ENCODE measurements at regions of chr17 and their contacts with region 1.

Region 1: GRCh38 chr17:42405963-42406495 is 17.0 kb downstream of the CAVIN1 start:
- DNase-seq: peak; percentile 77
- ATAC-seq: peak; percentile 83
- H3K4me3 Mint-ChIP-seq: no peak overlapping the region
- H3K27ac Mint-ChIP-seq: no peak overlapping the region
- H3K4me1 Mint-ChIP-seq: peaks cover 8% of the 10 kb centered on the region
- H3K27me3 Mint-ChIP-seq: peaks cover 3% of the 10 kb centered on the region
- CTCF ChIP-seq: no peak

Region 2: DNA sequence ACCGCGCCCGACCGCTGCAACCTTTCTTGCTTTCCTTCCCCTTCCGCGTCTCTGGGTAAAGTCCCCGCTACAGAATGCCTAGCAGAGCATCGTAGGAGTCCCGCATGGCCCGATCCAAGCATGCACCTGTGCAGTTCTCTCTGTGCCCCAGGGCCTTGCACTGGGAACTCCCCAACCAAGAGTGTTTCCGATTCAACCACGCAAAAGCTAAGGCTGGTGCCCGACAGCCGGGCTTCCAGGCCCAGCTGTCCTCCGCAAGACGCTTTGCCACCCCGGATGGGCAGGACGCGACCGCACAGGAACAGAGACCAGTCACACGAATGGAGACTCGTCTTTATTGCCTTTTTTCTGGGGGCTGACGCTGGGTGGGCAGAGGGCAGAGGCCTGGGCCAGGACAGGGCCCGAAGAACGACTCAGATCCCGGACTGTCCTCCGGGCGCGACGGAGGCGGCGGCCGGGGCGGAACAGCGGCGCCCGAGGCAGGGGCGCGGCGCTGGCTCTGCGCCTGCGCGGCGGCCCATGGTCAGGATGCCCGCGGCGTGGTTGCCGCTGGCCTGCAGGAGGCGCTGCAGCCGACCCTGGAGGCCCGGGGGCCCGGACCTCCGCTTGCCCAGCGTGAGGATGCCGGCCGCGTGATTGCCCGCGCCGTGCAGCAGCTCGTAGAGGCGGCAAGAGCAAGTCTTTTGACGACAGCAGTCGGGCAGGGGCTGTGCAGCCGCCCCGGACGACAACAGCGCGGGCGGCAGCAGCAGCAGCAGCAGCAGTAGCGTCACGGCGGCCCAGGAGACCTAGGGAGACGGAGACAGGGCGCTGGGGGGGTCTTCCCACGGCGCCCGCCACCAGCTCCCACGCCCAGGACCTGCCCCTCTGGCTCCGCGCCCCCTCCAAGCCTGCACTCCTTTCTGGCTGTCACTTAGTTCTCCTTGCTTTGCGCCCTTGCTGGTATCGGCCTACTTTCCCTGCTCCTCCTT is 222.0 kb before region 1 on chr17:
- CTCF ChIA-PET with region 1: interaction called, 3 read pairs
- POLR2A ChIA-PET with region 1: interaction called, 3 read pairs
- intact Hi-C with region 1: loop called (anchors 5 kb)
- DNase-seq: peak; percentile 87
- ATAC-seq: peak; percentile 64
- H3K4me3 Mint-ChIP-seq: peak overlapping the region; percentile 93
- H3K27ac Mint-ChIP-seq: peak overlapping the region; percentile 95
- H3K4me1 Mint-ChIP-seq: peaks cover 56% of the 10 kb centered on the region
- H3K27me3 Mint-ChIP-seq: no peaks in the 10 kb centered on the region
- CTCF ChIP-seq: peak; percentile 33

Region 3: GRCh38 chr17:42296012-42296411 is 110.0 kb before region 1 on chr17:
- CTCF ChIA-PET with region 1: no interaction called
- POLR2A ChIA-PET with region 1: no interaction called
- intact Hi-C with region 1: no loop called
- DNase-seq: no peak
- ATAC-seq: no peak
- H3K4me3 Mint-ChIP-seq: no peak overlapping the region
- H3K27ac Mint-ChIP-seq: no peak overlapping the region
- H3K4me1 Mint-ChIP-seq: peaks cover 8% of the 10 kb centered on the region
- H3K27me3 Mint-ChIP-seq: no peaks in the 10 kb centered on the region
- CTCF ChIP-seq: no peak

Region 4: GRCh38 chr17:42312285-42313130 is 93.5 kb before region 1 on chr17:
- CTCF ChIA-PET with region 1: interaction called, 202 read pairs
- POLR2A ChIA-PET with region 1: interaction called, 7 read pairs
- intact Hi-C with region 1: loop called (anchors 2 kb)
- DNase-seq: peak; percentile 70
- ATAC-seq: peak; percentile 77
- H3K4me3 Mint-ChIP-seq: peak overlapping the region; percentile 53
- H3K27ac Mint-ChIP-seq: peak overlapping the region; percentile 30
- H3K4me1 Mint-ChIP-seq: peaks cover 55% of the 10 kb centered on the region
- H3K27me3 Mint-ChIP-seq: no peaks in the 10 kb centered on the region
- CTCF ChIP-seq: no peak

Region 5: GRCh38 chr17:42337442-42337841 is 68.6 kb before region 1 on chr17:
- CTCF ChIA-PET with region 1: interaction called, 10 read pairs
- POLR2A ChIA-PET with region 1: no interaction called
- intact Hi-C with region 1: no loop called
- DNase-seq: no peak
- ATAC-seq: peak; percentile 66
- H3K4me3 Mint-ChIP-seq: no peak overlapping the region
- H3K27ac Mint-ChIP-seq: peak overlapping the region; percentile 73
- H3K4me1 Mint-ChIP-seq: peaks cover 26% of the 10 kb centered on the region
- H3K27me3 Mint-ChIP-seq: no peaks in the 10 kb centered on the region
- CTCF ChIP-seq: no peak

Region 6: GRCh38 chr17:42378597-42379594 is 27.1 kb before region 1 on chr17:
- CTCF ChIA-PET with region 1: interaction called, 3 read pairs
- POLR2A ChIA-PET with region 1: interaction called, 3 read pairs
- intact Hi-C with region 1: loop called (anchors 2 kb)
- DNase-seq: no peak
- ATAC-seq: peak; percentile 78
- H3K4me3 Mint-ChIP-seq: peak overlapping the region; percentile 84
- H3K27ac Mint-ChIP-seq: peak overlapping the region; percentile 93
- H3K4me1 Mint-ChIP-seq: peaks cover 64% of the 10 kb centered on the region
- H3K27me3 Mint-ChIP-seq: no peaks in the 10 kb centered on the region
- CTCF ChIP-seq: no peak

Measured in activated B cell treated with CpG ODN at 0.5 μM for 24 hours (primary cell).